AG04450 (cell line): ENCODE measurements at regions of chr1 and their contacts with region 1.

Region 1: DNA sequence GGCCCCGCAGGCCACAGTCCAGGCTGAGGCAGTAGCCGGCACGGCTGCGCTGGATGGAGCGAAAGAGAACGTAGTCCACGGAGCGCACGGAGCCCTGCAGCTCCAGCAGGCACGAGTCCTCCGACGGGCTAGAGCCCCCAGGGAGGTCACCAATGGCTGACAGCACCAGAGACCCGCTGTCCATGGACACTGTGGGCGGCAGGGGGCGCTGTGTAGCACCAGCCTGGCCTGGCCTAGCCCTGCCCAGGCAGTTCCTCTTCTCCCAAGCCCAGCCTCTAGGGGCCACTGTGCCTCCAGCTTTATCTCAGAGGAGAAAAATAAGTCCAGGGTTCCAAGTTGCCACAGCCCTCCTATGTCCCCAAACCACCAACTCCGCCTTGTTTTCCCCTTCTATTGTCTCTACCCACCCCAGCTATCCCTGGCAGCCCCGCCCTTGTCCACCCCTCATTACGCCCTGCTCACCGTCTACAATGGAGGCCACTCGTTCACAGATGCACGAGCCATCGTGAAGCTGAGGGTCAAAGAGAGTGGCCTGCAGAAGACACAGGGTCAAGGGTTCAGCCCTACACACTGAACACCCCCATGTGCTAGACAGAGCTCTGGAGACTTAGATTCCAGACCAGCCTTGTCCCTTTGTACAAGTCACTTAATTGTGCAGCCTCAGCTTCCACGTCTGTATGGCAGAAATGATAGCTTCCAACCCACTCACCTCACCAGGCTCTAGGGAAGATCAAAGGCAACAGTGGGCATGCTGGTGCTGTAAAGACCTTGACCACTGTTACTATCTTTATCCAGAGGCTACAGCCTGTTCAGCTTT is 4.4 kb downstream of the ENTREP3 start:
- DNase-seq: peak; percentile 81
- H3K4me3 ChIP-seq: 0 out of 2 replicates have a peak overlapping the region, but pooled peaks have one; percentile 10
- H3K27ac ChIP-seq: no peak overlapping the region
- H3K27me3 ChIP-seq: no peaks in the 10 kb centered on the region
- CTCF ChIP-seq: peak; percentile 99

Region 2: DNA sequence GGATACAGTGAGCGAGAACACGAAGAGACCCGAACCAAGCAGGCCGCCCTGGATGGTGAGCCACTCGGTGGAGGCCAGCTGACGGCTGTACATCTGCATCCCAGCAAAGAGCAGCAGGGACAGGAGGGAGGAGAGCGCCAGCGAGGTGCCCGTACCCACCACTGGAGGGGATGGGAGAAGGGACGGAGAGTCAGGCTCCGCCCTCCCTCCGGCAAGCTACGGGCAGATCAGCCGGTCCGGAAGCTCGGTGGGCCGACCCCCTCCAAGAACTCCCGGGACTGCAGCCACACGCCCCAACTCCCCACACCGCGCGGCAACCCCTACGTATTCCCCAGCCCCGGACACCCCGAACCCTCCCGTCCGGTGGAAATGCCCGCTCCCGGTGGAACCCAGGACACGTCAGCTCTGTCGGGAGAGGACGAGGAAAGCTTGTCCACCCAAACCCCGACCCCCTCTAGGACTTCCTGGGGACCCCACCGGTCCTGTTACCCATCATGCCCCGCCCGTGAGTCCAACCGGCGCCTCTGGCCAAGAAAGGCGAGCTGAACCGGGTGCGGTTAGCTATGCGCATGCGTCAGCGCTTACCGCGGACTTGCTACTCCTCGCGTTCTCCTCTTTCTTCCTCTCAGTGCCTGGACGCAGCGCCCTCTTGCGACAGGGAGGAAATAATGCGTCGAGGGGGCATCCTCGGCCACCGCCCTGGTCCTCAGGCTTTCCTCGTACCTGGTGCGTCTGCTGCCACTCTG is 77.9 kb before region 1 on chr1 and contains the start of gene KRTCAP2:
- CTCF ChIA-PET with region 1: interaction called, 12 read pairs
- POLR2A ChIA-PET with region 1: no interaction called
- DNase-seq: peak; percentile 93
- H3K4me3 ChIP-seq: peak within 1 kb of the TSS; percentile 99
- H3K27ac ChIP-seq: peak within 1 kb of the TSS; percentile 92
- H3K27me3 ChIP-seq: no peaks in the 10 kb centered on the region
- CTCF ChIP-seq: peak; percentile 96
- polyA plus RNA-seq, gene KRTCAP2: 102 and 131 TPM in 2 replicates

Region 3: GRCh38 chr1:155227261-155228095 is 23.4 kb before region 1 on chr1:
- CTCF ChIA-PET with region 1: interaction called, 20 read pairs
- POLR2A ChIA-PET with region 1: interaction called, 5 read pairs
- DNase-seq: peak; percentile 98
- H3K4me3 ChIP-seq: peak overlapping the region; percentile 71
- H3K27ac ChIP-seq: peak overlapping the region; percentile 96
- H3K27me3 ChIP-seq: no peaks in the 10 kb centered on the region
- CTCF ChIP-seq: no peak; the same call in 1 of the 2 replicates

Region 4: DNA sequence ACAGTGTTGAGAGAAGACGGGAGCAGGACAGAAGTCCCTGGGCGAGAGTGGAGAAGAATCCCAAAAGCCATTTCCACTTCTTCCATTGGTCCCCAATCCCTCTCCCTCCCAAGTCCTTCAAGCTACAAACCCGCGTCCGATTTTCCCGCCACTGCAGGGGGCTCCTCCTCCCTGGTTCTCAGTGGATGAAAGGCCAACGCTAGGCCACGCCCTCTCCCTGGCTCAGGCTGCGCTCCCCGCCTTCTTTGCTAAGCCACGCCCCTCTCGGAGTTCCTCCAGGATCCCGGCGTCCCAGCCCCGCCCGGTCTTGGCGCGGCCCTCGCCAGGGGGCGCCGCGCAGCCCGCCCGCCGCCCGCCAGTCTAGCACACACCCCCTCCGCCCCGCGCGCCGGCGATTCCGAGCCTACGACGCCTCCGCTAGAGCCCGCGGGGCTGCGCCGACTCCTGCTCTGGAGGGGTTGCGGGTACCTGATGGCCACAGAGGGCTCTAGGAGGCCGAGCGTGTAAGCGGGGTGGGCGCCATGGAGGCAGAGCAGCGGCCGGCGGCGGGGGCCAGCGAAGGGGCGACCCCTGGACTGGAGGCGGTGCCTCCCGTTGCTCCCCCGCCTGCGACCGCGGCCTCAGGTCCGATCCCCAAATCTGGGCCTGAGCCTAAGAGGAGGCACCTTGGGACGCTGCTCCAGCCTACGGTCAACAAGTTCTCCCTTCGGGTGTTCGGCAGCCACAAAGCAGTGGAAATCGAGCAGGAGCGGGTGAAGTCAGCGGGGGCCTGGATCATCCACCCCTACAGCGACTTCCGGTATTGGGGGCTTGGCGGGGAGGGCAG is 26.4 kb after region 1 on chr1 and contains the start of gene HCN3:
- CTCF ChIA-PET with region 1: interaction called, 56 read pairs
- POLR2A ChIA-PET with region 1: interaction called, 11 read pairs
- DNase-seq: peak; percentile 85
- H3K4me3 ChIP-seq: peak within 1 kb of the TSS; percentile 74
- H3K27ac ChIP-seq: no peak within 1 kb of the TSS
- H3K27me3 ChIP-seq: no peaks in the 10 kb centered on the region
- CTCF ChIP-seq: peak; percentile 47
- polyA plus RNA-seq, gene HCN3: 1.5 and 1.7 TPM in 2 replicates

Region 5: GRCh38 chr1:155339515-155340097 is 88.8 kb after region 1 on chr1:
- CTCF ChIA-PET with region 1: interaction called, 12 read pairs
- POLR2A ChIA-PET with region 1: no interaction called
- DNase-seq: no peak
- H3K4me3 ChIP-seq: no peak overlapping the region
- H3K27ac ChIP-seq: no peak overlapping the region
- H3K27me3 ChIP-seq: no peaks in the 10 kb centered on the region
- CTCF ChIP-seq: no peak

Region 6: GRCh38 chr1:155648551-155649147 is 397.8 kb after region 1 on chr1:
- CTCF ChIA-PET with region 1: interaction called, 21 read pairs
- POLR2A ChIA-PET with region 1: no interaction called
- DNase-seq: peak; percentile 77
- H3K4me3 ChIP-seq: peak overlapping the region; percentile 55
- H3K27ac ChIP-seq: peak overlapping the region; percentile 82
- H3K27me3 ChIP-seq: no peaks in the 10 kb centered on the region
- CTCF ChIP-seq: peak; percentile 78

Region 7: DNA sequence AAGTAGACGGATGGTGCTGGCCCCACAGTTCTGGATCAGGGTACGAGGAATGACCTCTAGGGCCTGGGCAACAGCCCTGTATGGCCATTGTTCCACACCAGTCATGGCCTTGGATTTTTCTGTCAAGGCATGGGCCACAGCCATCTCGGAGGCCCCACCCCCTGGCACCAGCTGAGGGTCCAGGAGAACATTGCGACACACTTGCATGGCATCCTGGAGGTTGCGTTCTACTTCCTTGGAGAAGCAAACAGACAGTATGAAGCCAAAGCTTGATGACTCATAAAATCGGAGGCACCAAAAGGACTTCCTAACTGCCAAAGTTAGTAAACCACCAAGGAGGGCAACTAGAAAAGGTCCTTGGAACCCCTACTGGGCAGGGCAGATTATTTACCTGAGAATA is 1060.1 kb after region 1 on chr1:
- CTCF ChIA-PET with region 1: no interaction called
- POLR2A ChIA-PET with region 1: no interaction called
- DNase-seq: no peak
- H3K4me3 ChIP-seq: no peak overlapping the region
- H3K27ac ChIP-seq: peak overlapping the region; percentile 21
- H3K27me3 ChIP-seq: no peaks in the 10 kb centered on the region
- CTCF ChIP-seq: no peak